B cell (primary cell): ENCODE measurements at regions of chr16 and their contacts with region 1.

Region 1: DNA sequence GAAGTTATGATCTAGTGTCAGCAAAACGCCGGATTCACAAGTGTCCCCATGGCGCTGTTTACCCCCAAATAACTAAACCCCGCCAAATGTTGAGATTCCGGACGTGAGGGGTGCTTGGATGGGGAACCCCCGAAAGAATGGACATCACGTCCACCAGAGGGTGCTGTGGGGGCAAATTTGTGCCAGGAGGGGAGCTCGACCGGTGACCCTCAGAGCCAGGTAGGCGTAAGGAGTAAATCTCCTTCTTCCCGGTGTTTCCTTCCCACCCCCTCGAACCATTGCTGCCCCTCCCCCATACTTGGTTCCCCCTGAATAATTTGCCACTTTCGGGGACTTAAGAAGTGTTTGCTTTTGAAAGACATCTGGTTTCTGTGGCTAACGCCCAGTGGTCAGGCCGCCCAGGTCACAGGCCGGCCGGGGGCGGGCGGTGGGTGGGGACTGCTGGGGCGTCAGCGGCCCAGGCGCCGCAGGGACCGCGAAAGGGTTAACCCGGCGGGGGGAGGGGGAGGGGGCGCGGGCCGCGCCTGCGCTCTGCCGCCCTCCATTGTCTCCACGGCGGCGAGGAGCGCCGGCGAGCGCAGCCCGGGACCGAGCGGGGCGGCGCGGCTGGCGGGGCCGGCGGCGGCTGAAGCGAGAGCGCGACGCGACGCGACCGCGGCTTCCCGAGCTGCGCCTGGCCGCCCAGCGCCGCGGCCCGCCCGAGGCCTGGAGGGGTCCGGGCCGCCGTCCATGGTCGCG is at the start of gene ZNRF1:
- DNase-seq: peak; percentile 81
- ATAC-seq: peak; percentile 79
- H3K4me3 ChIP-seq: peak within 1 kb of the TSS; percentile 21 to 75 (median 48)
- H3K4me3 Mint-ChIP-seq: peak within 1 kb of the TSS; percentile 91
- H3K27ac ChIP-seq: no peak within 1 kb of the TSS
- H3K27ac Mint-ChIP-seq: peak within 1 kb of the TSS; percentile 82
- H3K4me1 ChIP-seq: peaks cover 24 to 25% of the 10 kb centered on the region in 2 donors
- H3K4me1 Mint-ChIP-seq: peaks cover 17% of the 10 kb centered on the region
- H3K27me3 ChIP-seq: peaks cover 0 to 58% (median 21%) of the 10 kb centered on the region in 4 experiments
- H3K27me3 Mint-ChIP-seq: peaks cover 51% of the 10 kb centered on the region
- CTCF ChIP-seq: peak; percentile 77
- total RNA-seq, gene ZNRF1: 0.75 and 0.76 TPM in 2 replicates

Region 2: GRCh38 chr16:74709441-74709877 is 289.2 kb before region 1 on chr16:
- CTCF ChIA-PET with region 1: no interaction called
- POLR2A ChIA-PET with region 1: no interaction called
- intact Hi-C with region 1: no loop called
- DNase-seq: peak; percentile 85
- ATAC-seq: peak; percentile 95
- H3K4me3 ChIP-seq: no peak overlapping the region
- H3K4me3 Mint-ChIP-seq: no peak overlapping the region
- H3K27ac ChIP-seq: no peak overlapping the region
- H3K27ac Mint-ChIP-seq: no peak overlapping the region
- H3K4me1 ChIP-seq: no peaks in the 10 kb centered on the region
- H3K4me1 Mint-ChIP-seq: peaks cover 1% of the 10 kb centered on the region
- H3K27me3 ChIP-seq: no peaks in the 10 kb centered on the region
- H3K27me3 Mint-ChIP-seq: no peaks in the 10 kb centered on the region
- CTCF ChIP-seq: peak; percentile 98

Region 3: GRCh38 chr16:74771656-74772315 is 226.9 kb before region 1 on chr16:
- CTCF ChIA-PET with region 1: no interaction called
- POLR2A ChIA-PET with region 1: no interaction called
- intact Hi-C with region 1: no loop called
- DNase-seq: peak; percentile 55
- ATAC-seq: peak; percentile 34
- H3K4me3 ChIP-seq: peak overlapping the region in 1 of 5 experiments; percentile 2
- H3K4me3 Mint-ChIP-seq: peak overlapping the region; percentile 32
- H3K27ac ChIP-seq: no peak overlapping the region
- H3K27ac Mint-ChIP-seq: peak overlapping the region; percentile 50
- H3K4me1 ChIP-seq: peaks cover 31 to 34% of the 10 kb centered on the region in 2 donors
- H3K4me1 Mint-ChIP-seq: peaks cover 37% of the 10 kb centered on the region
- H3K27me3 ChIP-seq: peaks cover 0 to 6% (median 3%) of the 10 kb centered on the region in 4 experiments
- H3K27me3 Mint-ChIP-seq: peaks cover 22% of the 10 kb centered on the region
- CTCF ChIP-seq: no peak

Region 4: GRCh38 chr16:74936902-74937560 is 61.6 kb before region 1 on chr16:
- CTCF ChIA-PET with region 1: no interaction called
- POLR2A ChIA-PET with region 1: no interaction called
- intact Hi-C with region 1: no loop called
- DNase-seq: no peak
- ATAC-seq: no peak
- H3K4me3 ChIP-seq: no peak overlapping the region
- H3K4me3 Mint-ChIP-seq: no peak overlapping the region
- H3K27ac ChIP-seq: no peak overlapping the region
- H3K27ac Mint-ChIP-seq: no peak overlapping the region
- H3K4me1 ChIP-seq: no peaks in the 10 kb centered on the region
- H3K4me1 Mint-ChIP-seq: peaks cover 4% of the 10 kb centered on the region
- H3K27me3 ChIP-seq: no peaks in the 10 kb centered on the region
- H3K27me3 Mint-ChIP-seq: no peaks in the 10 kb centered on the region
- CTCF ChIP-seq: no peak

Region 5: DNA sequence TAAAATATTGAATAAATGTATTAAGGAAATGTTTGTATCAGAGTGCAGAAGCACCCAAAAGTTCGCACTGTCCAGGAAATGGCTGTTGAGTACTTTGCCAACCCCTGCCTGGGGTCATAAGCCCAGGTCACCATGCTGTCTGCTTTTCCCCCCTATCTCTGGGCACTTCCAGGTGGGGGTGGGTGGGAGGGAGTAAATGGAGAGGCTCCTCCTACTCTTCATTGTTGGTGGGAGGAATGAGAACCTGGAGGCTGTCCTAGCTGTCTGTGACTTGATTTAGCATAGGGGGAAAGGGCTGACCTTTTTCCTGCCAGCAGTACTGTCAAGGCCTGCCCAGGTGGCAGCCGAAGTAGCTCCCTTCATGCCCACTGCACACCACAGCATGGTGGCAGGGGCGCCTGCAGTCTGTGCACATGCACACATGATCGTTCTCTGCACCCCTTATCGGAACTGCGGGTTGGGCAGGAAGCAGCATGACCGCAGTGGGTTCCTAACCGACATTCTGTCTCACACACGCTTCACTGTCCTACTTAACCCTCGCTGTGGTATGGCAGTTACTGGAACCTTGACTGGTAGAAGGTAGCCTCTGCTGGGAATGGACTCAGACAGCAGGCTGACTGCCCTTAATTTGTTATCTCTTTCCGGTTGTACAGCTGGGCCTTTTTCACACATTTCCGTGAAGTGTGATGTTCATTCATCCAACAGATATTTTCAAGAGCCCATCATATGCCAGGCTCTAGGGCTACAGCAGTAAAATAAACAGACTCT is 76.5 kb after region 1 on chr16:
- CTCF ChIA-PET with region 1: no interaction called
- POLR2A ChIA-PET with region 1: no interaction called
- intact Hi-C with region 1: loop called (anchors 1 kb)
- DNase-seq: peak; percentile 83
- ATAC-seq: peak; percentile 93
- H3K4me3 ChIP-seq: peak overlapping the region in 1 of 5 experiments; percentile 38
- H3K4me3 Mint-ChIP-seq: peak overlapping the region; percentile 20
- H3K27ac ChIP-seq: no peak overlapping the region
- H3K27ac Mint-ChIP-seq: peak overlapping the region; percentile 42
- H3K4me1 ChIP-seq: peaks cover 31 to 37% of the 10 kb centered on the region in 2 donors
- H3K4me1 Mint-ChIP-seq: peaks cover 36% of the 10 kb centered on the region
- H3K27me3 ChIP-seq: peaks cover 0 to 55% (median 16%) of the 10 kb centered on the region in 4 experiments
- H3K27me3 Mint-ChIP-seq: peaks cover 36% of the 10 kb centered on the region
- CTCF ChIP-seq: no peak

Region 6: GRCh38 chr16:75110637-75111513 is 112.2 kb after region 1 on chr16:
- CTCF ChIA-PET with region 1: interaction called, 87 read pairs
- POLR2A ChIA-PET with region 1: no interaction called
- intact Hi-C with region 1: no loop called
- DNase-seq: peak; percentile 87
- ATAC-seq: peak; percentile 85
- H3K4me3 ChIP-seq: peak overlapping the region in 2 of 5 experiments; percentile 4 to 22
- H3K4me3 Mint-ChIP-seq: peak overlapping the region; percentile 73
- H3K27ac ChIP-seq: no peak overlapping the region
- H3K27ac Mint-ChIP-seq: peak overlapping the region; percentile 2
- H3K4me1 ChIP-seq: peaks cover 34 to 38% of the 10 kb centered on the region in 2 donors
- H3K4me1 Mint-ChIP-seq: peaks cover 33% of the 10 kb centered on the region
- H3K27me3 ChIP-seq: peaks cover 0 to 79% (median 34%) of the 10 kb centered on the region in 4 experiments
- H3K27me3 Mint-ChIP-seq: peaks cover 50% of the 10 kb centered on the region
- CTCF ChIP-seq: peak; percentile 88

Region 7: DNA sequence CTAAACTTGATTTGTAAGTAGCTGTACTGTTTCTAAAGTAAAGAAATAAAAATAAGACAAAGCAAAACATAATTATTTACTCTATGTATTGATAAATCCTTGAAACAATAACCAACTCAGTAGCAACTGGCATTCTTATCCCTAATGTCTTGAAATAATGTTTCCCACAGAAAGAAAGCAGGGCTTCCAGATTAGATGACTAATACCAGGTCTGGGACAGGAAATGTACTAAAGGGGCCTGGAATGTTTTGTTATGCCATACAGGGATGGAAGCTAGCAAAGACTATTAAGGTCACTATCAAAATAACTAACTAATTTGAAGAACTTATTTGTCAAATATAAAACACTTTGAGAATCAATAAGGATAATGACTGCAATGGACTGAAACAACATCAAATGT is 352.5 kb after region 1 on chr16:
- CTCF ChIA-PET with region 1: no interaction called
- POLR2A ChIA-PET with region 1: no interaction called
- intact Hi-C with region 1: no loop called
- DNase-seq: no peak
- ATAC-seq: no peak
- H3K4me3 ChIP-seq: no peak overlapping the region
- H3K4me3 Mint-ChIP-seq: no peak overlapping the region
- H3K27ac ChIP-seq: no peak overlapping the region
- H3K27ac Mint-ChIP-seq: no peak overlapping the region
- H3K4me1 ChIP-seq: no peaks in the 10 kb centered on the region
- H3K4me1 Mint-ChIP-seq: no peaks in the 10 kb centered on the region
- H3K27me3 ChIP-seq: no peaks in the 10 kb centered on the region
- H3K27me3 Mint-ChIP-seq: peaks cover 6% of the 10 kb centered on the region
- CTCF ChIP-seq: no peak